Caco-2 (cell line): ENCODE measurements at regions of chr17 and their contacts with region 1.

Region 1: GRCh38 chr17:28384281-28385036 is 13.0 kb downstream of the SARM1 start:
- DNase-seq: peak; percentile 83 to 86
- H3K4me3 ChIP-seq: peak overlapping the region; percentile 52
- H3K4me3 Mint-ChIP-seq: peak overlapping the region; percentile 89
- H3K27ac Mint-ChIP-seq: peak overlapping the region; percentile 18
- H3K4me1 ChIP-seq: peaks cover 31% of the 10 kb centered on the region
- H3K4me1 Mint-ChIP-seq: peaks cover 17% of the 10 kb centered on the region
- H3K27me3 ChIP-seq: no peaks in the 10 kb centered on the region
- H3K27me3 Mint-ChIP-seq: no peaks in the 10 kb centered on the region
- CTCF ChIP-seq: no peak

Region 2: DNA sequence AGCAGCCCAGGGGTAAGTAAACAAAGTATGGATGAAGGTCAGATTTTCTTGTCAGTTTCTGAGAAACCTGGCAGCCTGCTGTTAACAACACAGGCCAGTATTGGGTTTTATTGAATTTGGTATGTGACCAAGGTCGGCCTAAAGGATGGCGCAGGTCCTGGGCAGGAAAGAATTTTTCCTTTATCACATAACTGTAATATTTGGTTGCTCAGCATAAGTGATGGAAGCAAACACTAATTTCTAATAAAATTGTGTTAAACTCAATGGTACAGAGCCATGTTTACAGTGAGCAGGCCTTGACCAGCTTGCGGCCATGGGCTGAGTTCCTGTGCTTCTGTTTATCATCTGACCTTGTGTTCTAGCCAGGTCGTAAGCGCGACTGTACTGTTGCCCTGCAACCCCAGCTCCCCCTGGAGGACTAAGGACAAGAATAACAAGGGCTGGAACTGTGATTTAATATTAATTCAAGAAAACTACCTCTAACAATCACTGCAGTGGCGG is 37.7 kb before region 1 on chr17:
- CTCF ChIA-PET with region 1: no interaction called
- POLR2A ChIA-PET with region 1: no interaction called
- intact Hi-C with region 1: no loop called
- DNase-seq: peak; percentile 70 to 72
- H3K4me3 ChIP-seq: no peak overlapping the region
- H3K4me3 Mint-ChIP-seq: no peak overlapping the region
- H3K27ac Mint-ChIP-seq: peak overlapping the region; percentile 1
- H3K4me1 ChIP-seq: peaks cover 22% of the 10 kb centered on the region
- H3K4me1 Mint-ChIP-seq: peaks cover 8% of the 10 kb centered on the region
- H3K27me3 ChIP-seq: no peaks in the 10 kb centered on the region
- H3K27me3 Mint-ChIP-seq: no peaks in the 10 kb centered on the region
- CTCF ChIP-seq: peak; percentile 48 to 66

Region 3: DNA sequence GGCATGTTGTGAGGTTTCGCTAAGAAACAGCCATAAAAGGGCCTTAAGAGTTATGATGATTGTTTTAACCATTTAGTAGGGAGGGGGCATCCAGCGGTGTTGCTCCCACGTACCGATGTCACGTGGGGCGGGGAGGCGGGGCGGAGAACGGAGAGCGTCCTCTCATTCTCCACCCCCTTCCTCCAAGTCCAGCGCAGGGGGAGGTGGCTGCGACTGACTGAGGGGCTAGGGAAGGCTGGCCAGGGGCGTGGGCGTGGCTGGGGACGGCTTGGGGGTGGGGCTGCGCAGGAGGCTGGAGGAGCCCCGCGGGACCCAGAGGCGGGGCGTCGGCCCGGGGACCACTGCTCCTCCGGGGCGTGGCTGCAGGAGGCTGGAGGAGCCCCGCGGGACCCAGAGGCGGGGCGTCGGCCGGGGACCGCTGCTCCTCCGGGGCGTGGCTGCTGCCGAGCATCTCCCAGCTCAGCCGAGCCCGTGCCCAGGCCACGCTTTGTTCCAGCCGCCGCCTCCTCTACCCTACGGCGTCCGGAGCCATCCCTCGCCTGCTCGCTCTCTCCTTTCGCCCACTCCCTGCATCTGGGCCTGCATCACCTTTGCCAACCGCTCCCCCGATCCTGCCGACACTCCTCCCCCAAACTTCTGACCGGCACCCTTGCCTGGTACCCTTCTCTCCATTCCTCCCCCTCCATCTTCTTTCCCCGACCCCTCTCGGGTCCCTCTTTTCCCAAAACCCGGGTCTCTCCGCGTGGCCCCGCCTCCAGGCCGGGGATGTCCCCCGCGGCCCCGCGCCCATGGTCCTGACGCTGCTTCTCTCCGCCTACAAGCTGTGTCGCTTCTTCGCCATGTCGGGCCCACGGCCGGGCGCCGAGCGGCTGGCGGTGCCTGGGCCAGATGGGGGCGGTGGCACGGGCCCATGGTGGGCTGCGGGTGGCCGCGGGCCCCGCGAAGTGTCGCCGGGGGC is 12.9 kb before region 1 on chr17 and contains the start of gene SARM1:
- CTCF ChIA-PET with region 1: interaction called, 10 read pairs
- POLR2A ChIA-PET with region 1: interaction called, 17 read pairs
- intact Hi-C with region 1: loop called (anchors 1 kb)
- DNase-seq: peak; percentile 99 to 100
- H3K4me3 ChIP-seq: peak within 1 kb of the TSS; percentile 40
- H3K4me3 Mint-ChIP-seq: peak within 1 kb of the TSS; percentile 75
- H3K27ac Mint-ChIP-seq: peak within 1 kb of the TSS; percentile 88
- H3K4me1 ChIP-seq: peaks cover 46% of the 10 kb centered on the region
- H3K4me1 Mint-ChIP-seq: peaks cover 54% of the 10 kb centered on the region
- H3K27me3 ChIP-seq: no peaks in the 10 kb centered on the region
- H3K27me3 Mint-ChIP-seq: no peaks in the 10 kb centered on the region
- CTCF ChIP-seq: no peak
- total RNA-seq, gene SARM1: 32.8 and 34.4 TPM in 2 replicates